Lower leg skin (tissue), 4 donors: ENCODE measurements at regions of chr19 and their contacts with region 1.

Region 1: DNA sequence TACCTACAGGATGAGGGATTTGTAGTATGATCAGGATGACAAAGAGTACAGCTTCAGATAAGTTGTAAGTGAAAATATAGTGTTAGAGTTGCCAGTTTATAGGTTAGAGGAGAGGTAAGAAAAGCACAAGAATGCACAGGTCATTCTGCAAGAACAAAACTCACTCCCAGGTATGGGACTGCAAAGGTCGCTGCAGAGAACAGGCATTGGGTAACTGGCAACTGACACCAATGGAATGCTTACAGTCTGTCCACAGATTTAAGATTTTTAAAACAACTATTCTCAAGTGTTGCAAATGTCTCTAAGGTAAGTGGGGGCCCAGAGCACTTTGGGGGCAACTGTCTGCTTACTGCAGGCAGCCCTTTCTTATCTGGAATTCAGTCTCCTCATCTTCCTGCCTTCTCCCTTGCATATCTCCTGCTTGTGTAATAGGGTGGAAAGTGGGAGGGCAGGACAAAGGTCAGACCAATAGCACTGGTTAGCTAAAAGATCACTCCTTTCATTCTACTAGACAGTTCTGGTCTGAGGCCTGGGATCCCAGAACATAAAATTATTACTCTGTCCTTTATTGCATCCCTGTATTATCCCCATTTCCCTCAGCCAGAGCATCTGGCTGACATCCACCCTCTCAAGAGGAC is 42.3 kb upstream of the ZNF726 start:
- DNase-seq: no peak
- H3K4me3 ChIP-seq: no peak overlapping the region
- CTCF ChIP-seq: no peak
- POLR2A ChIP-seq: no peak

Region 2: DNA sequence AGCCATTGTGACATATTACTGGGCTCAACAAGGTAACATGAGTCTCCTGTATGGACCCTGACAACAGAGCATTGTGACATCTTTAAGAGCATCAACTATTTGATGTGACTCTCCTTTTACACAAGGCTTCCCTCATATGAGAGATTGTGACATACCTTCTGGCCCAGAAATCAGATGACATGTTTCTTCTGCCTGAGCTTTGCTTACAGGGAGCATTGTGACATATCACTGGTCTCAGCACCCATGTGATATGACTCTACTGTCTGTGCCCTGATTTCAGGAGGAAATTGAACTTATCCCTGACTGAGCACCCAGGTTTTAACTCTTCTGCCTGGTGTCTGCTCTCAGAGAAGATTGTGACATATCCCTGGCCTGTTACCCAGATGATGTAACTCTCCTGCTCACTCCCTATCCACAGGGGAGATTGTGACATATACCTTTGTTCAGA is 97.9 kb before region 1 on chr19:
- intact Hi-C with region 1: no loop called
- DNase-seq: peak; percentile 25 to 50
- H3K4me3 ChIP-seq: no peak overlapping the region
- CTCF ChIP-seq: no peak
- POLR2A ChIP-seq: no peak

Region 3: DNA sequence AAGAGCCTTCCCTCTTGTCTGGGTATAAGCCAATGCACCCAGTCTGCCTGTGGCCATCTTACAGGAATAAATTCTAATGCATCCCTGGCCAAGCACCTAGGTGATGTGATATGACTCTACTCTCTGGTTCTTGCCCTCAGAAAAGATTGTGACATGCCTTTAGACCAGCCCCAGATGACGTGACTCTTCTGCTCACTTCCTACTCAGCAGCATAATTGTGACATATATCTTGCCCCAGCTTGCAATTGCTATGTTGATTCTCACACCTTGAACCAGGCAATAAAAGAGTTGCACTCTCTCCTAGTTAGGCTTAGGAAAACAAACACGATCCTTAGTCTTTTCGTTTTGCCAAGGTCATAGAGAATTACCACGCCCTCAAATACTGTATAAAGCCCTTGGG is 29.0 kb after region 1 on chr19:
- intact Hi-C with region 1: no loop called
- DNase-seq: no peak
- H3K4me3 ChIP-seq: no peak overlapping the region
- CTCF ChIP-seq: no peak
- POLR2A ChIP-seq: no peak

Region 4: DNA sequence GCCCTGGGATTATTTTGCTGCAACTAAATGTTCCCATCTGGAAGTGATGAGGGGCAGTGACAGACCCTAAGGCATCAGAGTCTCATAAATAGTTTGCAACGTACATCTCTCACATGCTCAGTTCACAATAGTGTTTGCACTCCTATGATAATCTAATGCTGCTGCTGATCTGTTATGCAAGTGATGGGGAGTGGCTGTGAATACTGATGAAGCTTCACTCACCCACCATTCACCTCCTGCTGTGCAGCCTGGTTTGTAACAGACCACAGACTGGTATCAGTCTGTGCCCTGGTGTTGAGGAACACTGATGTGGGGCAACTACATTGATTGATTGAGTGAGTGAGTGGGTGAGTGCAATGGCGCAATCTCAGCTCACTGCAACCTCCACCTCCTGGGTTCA is 97.2 kb after region 1 on chr19:
- intact Hi-C with region 1: loop called (anchors 5 kb)
- DNase-seq: no peak
- H3K4me3 ChIP-seq: no peak overlapping the region
- CTCF ChIP-seq: no peak
- POLR2A ChIP-seq: no peak